Sigmoid colon (tissue), 7 donors: ENCODE measurements at regions of chr17 and their contacts with region 1.

Region 1: GRCh38 chr17:57747221-57748017 is 2.3 kb upstream of the CCDC182 start:
- DNase-seq: no peak
- H3K4me3 ChIP-seq: no peak overlapping the region
- H3K27ac ChIP-seq: no peak overlapping the region
- H3K4me1 ChIP-seq: no peaks in the 10 kb centered on the region
- H3K27me3 ChIP-seq: no peaks in the 10 kb centered on the region
- CTCF ChIP-seq: peak; percentile 36 to 63 (median 50)
- EP300 ChIP-seq: no peak
- POLR2A ChIP-seq: no peak

Region 2: DNA sequence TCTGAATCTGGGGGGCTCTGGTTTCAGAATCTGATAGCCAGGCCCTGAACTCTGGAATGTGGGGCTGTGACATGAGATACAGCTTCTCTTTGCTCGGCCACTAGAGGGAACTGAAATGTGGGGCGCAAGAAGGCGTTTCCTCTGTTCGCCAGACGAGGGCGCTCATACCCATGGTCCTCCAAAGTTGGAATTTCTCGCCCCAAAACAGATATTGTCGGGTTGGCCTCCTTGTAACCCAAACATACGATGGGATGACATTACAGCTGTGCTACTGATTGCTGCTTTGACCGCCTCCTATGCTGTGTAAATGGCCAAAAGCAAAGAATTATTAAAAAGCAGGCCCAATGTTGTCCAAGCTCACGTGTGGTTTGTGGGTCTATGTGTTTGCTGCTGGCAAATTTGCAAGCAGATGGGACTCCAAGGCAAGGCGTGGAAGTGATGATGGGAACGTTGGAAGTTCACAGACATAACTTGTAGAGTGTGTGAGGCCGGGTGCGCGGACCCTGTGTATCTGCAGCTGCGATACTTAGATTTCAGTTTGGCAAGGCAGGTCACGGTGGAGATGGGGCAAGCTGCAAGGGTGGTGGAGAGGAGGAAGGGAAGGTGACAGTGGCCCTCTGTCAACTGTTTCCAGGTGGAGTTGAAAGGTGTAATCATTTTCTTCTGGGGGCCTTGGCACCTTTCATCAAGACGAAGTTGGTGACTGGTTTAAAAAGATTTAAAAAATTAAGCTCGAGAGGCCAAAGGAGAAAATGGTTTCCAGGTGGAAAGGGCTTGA is 504.1 kb before region 1 on chr17:
- intact Hi-C with region 1: loop called (anchors 1 kb)
- DNase-seq: peak; percentile 81
- H3K4me3 ChIP-seq: no peak overlapping the region
- H3K27ac ChIP-seq: no peak overlapping the region
- H3K4me1 ChIP-seq: no peaks in the 10 kb centered on the region
- H3K27me3 ChIP-seq: no peaks in the 10 kb centered on the region
- CTCF ChIP-seq: peak; percentile 96 to 99 (median 98)
- EP300 ChIP-seq: no peak
- POLR2A ChIP-seq: no peak

Region 3: GRCh38 chr17:57552114-57552624 is 195.2 kb before region 1 on chr17:
- intact Hi-C with region 1: no loop called
- DNase-seq: no peak
- H3K4me3 ChIP-seq: no peak overlapping the region
- H3K27ac ChIP-seq: no peak overlapping the region
- H3K4me1 ChIP-seq: peaks cover 0 to 35% (median 24%) of the 10 kb centered on the region in 4 donors
- H3K27me3 ChIP-seq: no peaks in the 10 kb centered on the region
- CTCF ChIP-seq: peak in 2 of 4 experiments; percentile 13 to 39
- EP300 ChIP-seq: no peak
- POLR2A ChIP-seq: no peak

Region 4: DNA sequence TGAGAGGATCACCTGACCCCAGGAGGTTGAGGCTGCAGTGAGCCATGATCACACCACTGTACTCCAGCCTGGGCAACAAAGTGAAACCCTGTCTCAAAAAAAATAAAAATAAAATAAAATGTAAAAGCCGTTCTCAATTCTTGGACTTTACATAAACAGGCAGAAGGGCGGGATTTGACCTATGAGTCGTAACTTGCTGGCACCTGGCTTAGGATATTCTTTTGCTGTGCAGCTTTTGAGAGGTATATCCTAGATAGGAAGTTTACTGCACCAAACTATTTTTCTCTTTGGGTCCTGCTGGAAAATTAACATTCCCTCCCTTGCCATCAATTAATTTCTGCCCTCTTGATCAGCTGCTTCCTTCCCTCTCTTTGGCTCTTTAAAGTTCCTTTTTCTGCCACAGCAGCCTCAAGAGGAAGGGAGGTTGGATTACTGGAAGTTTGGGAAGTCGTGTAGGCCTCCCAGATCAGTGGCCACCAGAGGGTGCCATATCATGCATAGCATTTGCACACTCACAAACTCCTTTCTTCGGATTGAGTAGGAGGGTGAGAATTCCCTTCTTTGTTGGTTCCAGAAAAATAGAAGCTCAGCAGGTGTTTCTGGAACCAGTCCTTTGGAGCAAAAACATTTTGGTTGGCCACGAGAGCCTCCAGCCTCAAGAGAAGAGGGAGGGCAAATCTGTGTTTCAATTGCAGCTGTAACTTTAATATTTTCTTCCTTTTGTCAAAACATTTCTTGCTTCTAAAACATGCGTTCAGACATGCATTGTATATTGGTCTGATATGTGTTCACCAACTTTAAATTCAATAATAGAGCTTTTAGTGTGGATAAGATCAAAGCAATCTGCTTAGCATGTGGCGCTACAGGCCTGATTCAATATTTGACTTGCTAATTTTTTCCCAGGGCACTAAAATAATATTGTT is 149.6 kb before region 1 on chr17:
- intact Hi-C with region 1: loop called (anchors 10 kb)
- DNase-seq: no peak
- H3K4me3 ChIP-seq: no peak overlapping the region
- H3K27ac ChIP-seq: peak overlapping the region in 1 of 4 donors; percentile 29
- H3K4me1 ChIP-seq: peaks cover 0 to 4% (median 2%) of the 10 kb centered on the region in 4 donors
- H3K27me3 ChIP-seq: no peaks in the 10 kb centered on the region
- CTCF ChIP-seq: peak in 3 of 4 experiments; percentile 70 to 73 (median 73)
- EP300 ChIP-seq: no peak
- POLR2A ChIP-seq: no peak

Region 5: DNA sequence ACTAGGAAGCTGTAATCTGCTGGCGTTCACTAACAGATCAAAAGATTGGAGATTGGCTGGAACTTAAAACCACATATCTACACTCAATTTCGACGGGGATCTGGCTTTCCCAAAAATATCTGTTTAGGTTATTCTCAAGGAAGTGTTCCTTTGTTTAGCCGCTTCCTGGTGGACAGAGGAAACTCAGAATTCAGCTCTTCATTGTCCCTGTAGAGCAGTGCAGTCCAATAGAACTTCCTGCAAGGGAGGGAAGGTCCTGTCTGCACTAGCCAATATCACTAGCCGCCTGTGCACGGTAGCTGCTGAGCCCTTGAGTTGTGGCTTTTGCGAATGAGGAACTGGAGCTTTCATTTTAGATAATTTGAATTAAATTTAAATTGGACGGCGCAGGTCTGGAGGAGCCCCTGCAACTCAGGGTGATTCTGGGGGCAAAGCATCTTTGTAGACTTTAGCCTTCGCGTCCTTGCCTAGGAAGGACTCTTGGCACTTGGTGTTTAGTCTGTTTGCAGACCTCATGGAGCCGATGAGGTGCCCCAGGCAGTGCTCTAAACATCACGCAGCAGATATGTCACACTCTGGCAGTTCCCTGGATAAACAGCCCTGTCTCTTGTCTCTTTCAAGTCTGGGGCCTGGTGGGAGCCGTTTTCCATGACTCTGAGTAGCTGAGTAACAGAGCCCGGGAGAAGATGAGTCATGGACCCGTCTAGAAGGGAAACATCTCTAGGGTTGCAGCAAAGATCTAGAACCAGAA is 124.6 kb before region 1 on chr17:
- intact Hi-C with region 1: loop called (anchors 10 kb)
- DNase-seq: no peak
- H3K4me3 ChIP-seq: no peak overlapping the region
- H3K27ac ChIP-seq: peak overlapping the region in 1 of 4 donors; percentile 25
- H3K4me1 ChIP-seq: peaks cover 0 to 8% (median 2%) of the 10 kb centered on the region in 4 donors
- H3K27me3 ChIP-seq: no peaks in the 10 kb centered on the region
- CTCF ChIP-seq: no peak
- EP300 ChIP-seq: no peak
- POLR2A ChIP-seq: no peak

Region 6: DNA sequence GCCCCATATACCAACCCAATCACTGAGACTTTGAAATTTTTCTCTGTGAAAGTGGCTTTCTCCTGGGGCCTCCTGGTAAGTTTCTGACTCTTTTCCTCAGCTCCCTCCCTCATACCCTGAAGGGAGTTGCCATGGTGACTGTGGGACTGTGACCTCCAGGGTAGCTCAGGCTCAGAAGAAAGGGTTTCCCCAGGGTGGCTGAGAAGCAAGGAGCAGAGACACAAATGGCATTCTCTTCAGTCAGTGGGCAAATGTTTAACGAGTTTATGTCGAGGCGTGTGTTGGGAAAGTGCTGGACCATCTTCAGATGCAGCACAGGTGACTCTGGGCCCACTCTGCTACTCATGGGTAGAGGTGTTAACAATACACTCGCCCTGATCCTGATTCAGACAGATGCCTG is 55.6 kb after region 1 on chr17:
- intact Hi-C with region 1: no loop called
- DNase-seq: no peak
- H3K4me3 ChIP-seq: no peak overlapping the region
- H3K27ac ChIP-seq: no peak overlapping the region
- H3K4me1 ChIP-seq: no peaks in the 10 kb centered on the region
- H3K27me3 ChIP-seq: no peaks in the 10 kb centered on the region
- CTCF ChIP-seq: no peak
- EP300 ChIP-seq: no peak
- POLR2A ChIP-seq: no peak